Activated T-helper 1 cell treated with anti-CD3 and anti-CD28 coated beads, Interleukin-12 subunit alpha, Interleukin-12 subunit beta, Interleukin-2, Interleukin-4 antibody, amounts not matched to agents 30 ng/mL and 10 ng/mL and 1 ng/mL, durations not matched to agents 14 hours and 24 hours and 36 hours (primary cell): ENCODE measurements at regions of chr1 and their contacts with region 1.

Region 1: DNA sequence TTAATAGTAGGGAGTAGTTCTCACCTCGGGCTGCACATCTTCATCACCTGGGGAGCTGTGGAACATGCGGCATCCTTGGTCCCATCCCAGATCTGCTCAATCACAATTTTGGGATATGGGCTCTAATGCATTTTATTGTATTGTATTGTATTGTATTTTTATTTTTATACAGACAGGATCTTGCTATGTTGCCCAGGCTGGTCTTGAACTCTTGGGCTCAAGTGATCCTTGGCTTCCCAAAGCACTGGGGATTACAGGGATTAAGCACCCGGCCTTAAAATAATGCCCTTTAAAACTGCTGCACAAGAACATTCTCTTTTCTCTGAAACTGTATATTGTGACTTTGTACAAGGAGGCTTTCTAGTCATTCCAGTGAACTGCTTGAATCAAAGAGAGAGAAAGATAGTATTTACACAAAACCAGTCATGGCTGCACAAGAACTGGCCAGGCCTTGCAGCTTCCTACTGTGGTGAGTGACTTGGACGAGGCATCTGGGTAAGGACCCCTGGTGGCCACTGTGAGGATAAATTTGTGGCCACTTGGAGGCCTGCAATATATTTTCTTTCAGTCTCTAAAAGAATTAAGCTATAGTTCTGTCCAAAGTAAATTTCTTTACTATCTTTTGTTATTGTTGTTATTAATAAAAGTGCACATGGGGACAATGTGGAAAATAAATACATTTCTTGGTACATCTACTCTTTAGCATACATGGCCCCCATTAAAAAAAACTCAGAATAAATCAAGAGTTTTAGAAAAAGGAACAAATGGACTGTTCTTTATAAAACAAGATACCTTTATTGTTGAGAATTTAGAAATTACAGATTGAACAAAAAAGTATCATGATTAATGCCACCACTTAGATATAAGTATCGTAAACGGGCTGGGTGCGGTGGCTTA is 48.0 kb downstream of the TBCE start:
- DNase-seq: peak; percentile 36
- H3K4me3 Mint-ChIP-seq: no peak overlapping the region
- H3K27ac Mint-ChIP-seq: no peak overlapping the region
- H3K4me1 Mint-ChIP-seq: no peaks in the 10 kb centered on the region
- H3K27me3 Mint-ChIP-seq: no peaks in the 10 kb centered on the region

Region 2: GRCh38 chr1:234486498-234487448 is 928.5 kb before region 1 on chr1:
- intact Hi-C with region 1: loop called (anchors 1 kb)
- DNase-seq: peak; percentile 31
- H3K4me3 Mint-ChIP-seq: peak overlapping the region; percentile 34
- H3K27ac Mint-ChIP-seq: peak overlapping the region; percentile 97
- H3K4me1 Mint-ChIP-seq: peaks cover 49% of the 10 kb centered on the region
- H3K27me3 Mint-ChIP-seq: peaks cover 16% of the 10 kb centered on the region

Region 3: DNA sequence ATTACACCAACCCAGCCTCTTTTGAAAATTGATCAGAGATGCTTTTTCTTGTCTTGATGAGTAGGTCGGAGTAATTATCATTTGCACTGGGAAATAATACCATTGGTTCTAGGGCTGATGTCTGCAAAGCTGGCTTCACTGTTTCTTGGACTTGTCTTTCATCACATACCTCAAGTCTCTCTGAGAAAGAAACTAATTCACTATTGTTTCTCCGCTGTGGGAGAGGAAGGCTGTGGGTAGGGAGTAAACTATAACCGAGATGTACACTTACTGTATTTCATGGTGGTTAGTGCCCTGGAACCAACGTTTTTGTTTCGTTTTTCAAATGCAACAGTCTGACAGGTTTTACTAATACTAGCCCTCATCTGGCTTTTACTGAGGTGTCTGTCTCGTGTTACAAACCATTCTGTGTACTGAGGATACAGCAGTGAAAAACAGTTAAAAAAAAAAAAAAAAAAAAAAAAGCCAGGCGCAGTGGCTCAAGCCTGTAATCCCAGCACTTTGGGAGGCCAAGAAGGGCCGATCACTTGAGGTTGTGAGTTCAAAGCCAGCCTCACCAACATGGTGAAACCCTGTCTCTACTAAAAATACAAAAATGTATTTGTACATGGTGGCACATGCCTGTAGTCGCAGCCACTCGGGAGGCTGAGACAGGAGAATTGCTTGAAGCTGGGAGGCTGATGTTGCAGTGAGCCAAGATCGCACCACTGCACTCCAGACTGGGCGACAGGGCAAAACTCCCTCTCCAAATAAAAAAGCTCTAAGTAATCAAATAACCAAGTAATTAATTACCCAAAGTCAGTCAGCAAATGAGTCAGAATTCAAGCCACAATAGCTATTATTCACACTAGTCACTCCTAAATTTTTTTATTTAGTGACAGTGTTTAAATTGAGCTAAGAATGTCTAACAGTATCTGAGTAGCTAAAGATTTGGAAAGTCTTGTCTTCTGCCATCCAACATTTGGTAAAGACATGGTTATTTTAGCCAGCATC is 309.9 kb before region 1 on chr1:
- intact Hi-C with region 1: loop called (anchors 1 kb)
- DNase-seq: peak; percentile 26
- H3K4me3 Mint-ChIP-seq: peak overlapping the region; percentile 81
- H3K27ac Mint-ChIP-seq: peak overlapping the region; percentile 85
- H3K4me1 Mint-ChIP-seq: peaks cover 48% of the 10 kb centered on the region
- H3K27me3 Mint-ChIP-seq: no peaks in the 10 kb centered on the region

Region 4: DNA sequence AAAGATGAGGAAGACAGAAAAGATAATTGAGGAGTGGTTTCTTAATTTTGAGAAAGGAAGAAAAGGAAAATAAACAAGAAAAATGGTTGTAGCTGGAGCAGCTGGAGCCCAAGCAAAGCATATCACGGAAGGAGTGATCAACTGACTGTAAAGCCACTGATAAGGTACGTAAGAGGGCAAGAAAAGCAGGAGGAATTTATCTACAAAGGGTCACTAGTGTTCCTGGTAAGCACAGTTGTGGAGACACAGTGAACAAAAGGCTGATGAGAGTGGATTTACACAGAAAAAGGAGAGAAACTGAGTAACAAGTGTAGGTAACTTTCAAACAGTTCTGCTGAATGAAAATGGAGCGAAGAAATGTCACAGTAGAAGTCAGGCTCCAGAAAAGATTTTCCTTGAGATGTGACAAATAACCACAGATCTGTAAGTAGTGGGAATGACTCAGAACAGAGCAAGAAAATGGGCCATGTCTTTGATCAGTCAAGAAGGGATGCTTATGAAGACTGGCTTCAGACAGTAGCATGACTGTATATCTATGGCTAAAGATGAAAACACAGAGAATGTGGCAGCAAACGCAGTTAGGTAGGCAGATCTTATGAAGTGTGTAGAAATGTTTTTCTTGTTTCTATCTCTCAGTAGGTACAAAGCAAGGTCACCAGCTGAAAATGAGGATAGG is 208.6 kb before region 1 on chr1:
- intact Hi-C with region 1: loop called (anchors 2 kb)
- DNase-seq: no peak
- H3K4me3 Mint-ChIP-seq: peak overlapping the region; percentile 17
- H3K27ac Mint-ChIP-seq: peak overlapping the region; percentile 87
- H3K4me1 Mint-ChIP-seq: peaks cover 23% of the 10 kb centered on the region
- H3K27me3 Mint-ChIP-seq: no peaks in the 10 kb centered on the region

Region 5: DNA sequence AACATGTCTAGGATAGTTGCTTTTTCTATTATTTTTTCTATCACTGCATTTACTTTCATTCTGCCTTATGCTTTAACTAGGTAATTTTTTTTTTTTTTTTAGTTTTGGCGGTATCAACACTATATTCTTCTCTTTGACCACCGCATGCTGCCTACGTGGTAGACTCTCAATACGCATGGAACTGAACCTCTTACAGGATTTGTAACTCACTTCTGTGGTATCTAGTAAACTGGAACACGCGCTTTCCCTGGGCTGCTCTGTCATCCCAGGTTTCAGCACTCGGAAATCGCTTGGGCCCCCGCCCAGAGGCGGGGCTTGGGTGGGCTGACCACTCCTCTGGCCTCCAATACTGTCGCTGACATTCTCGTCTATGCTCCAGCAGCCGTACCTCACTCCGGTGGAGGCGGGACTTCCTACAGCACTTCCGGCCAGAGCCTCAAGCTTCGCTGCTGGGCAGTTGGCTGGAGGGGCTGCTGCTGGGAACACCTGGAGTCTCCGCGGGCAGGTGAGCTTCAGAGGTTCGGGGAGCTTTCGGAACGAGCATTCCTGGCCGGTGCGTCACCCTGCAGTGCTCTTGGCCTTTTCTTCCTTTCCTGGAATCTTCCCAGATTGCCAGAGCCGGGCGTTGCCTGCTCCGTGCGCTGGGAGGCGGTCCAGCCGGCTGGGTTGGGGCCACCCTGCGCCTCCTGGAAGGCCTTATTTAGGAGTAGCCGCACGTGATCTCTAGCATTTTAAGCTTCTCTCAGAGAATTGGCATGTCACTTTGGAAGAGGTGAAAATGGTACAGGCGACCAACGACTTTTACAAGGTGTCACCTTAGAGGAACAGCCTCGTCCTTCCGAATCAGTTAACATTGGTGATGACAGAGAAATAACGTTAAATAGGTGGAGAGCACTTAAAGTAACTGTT is 48.0 kb before region 1 on chr1 and contains the start of gene TBCE:
- intact Hi-C with region 1: loop called (anchors 1 kb)
- DNase-seq: peak; percentile 87
- H3K4me3 Mint-ChIP-seq: peak within 1 kb of the TSS; percentile 95
- H3K27ac Mint-ChIP-seq: peak within 1 kb of the TSS; percentile 93
- H3K4me1 Mint-ChIP-seq: peaks cover 34% of the 10 kb centered on the region
- H3K27me3 Mint-ChIP-seq: no peaks in the 10 kb centered on the region
- total RNA-seq, gene TBCE: 29.0 and 29.2 TPM in 2 replicates